Colonic mucosa (tissue), 4 donors: ENCODE measurements at regions of chr3 and their contacts with region 1.

Region 1: GRCh38 chr3:31777092-31777491 is 204.0 kb downstream of the OSBPL10 start:
- DNase-seq: no peak
- H3K4me3 ChIP-seq: no peak overlapping the region
- H3K27ac ChIP-seq: no peak overlapping the region
- H3K4me1 ChIP-seq: no peaks in the 10 kb centered on the region
- H3K27me3 ChIP-seq: no peaks in the 10 kb centered on the region
- CTCF ChIP-seq: no peak

Region 2: GRCh38 chr3:31606453-31606852 is 170.6 kb before region 1 on chr3:
- intact Hi-C with region 1: loop called (anchors 10 kb)
- DNase-seq: no peak
- H3K4me3 ChIP-seq: no peak overlapping the region
- H3K27ac ChIP-seq: no peak overlapping the region
- H3K4me1 ChIP-seq: no peaks in the 10 kb centered on the region
- H3K27me3 ChIP-seq: no peaks in the 10 kb centered on the region
- CTCF ChIP-seq: no peak

Region 3: DNA sequence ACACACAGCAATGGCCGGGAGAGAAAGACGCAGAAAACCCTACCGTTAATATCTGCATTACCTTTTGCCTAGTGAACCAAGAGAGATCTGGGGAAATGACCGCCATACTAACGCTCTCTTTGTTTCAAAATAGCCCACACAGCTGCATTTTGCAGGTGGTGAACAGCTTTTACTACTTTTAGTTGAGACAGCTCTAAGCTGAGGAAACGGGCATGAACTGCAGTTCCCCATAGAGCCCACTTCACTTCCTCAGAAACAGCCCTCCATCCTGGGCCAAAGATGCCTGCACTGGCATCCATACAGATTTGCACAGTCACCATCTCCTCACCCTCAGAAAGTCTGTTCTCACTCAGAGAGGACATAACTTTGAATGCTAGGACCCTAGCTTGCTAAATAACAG is 249.5 kb after region 1 on chr3:
- intact Hi-C with region 1: no loop called
- DNase-seq: no peak
- H3K4me3 ChIP-seq: no peak overlapping the region
- H3K27ac ChIP-seq: no peak overlapping the region
- H3K4me1 ChIP-seq: peaks cover 6% of the 10 kb centered on the region
- H3K27me3 ChIP-seq: no peaks in the 10 kb centered on the region
- CTCF ChIP-seq: no peak